WTC11 (cell line): ENCODE measurements at regions of chr1 and their contacts with region 1.

Region 1: GRCh38 chr1:47437447-47438164 is at the start of gene FOXD2:
- DNase-seq: peak; percentile 95
- ATAC-seq: peak; percentile 57
- H3K4me3 Mint-ChIP-seq: peak within 1 kb of the TSS; percentile 74
- H3K27ac Mint-ChIP-seq: no peak within 1 kb of the TSS
- H3K4me1 Mint-ChIP-seq: peaks cover 34% of the 10 kb centered on the region
- H3K27me3 Mint-ChIP-seq: peaks cover 49% of the 10 kb centered on the region
- CTCF ChIP-seq: peak; percentile 99
- total RNA-seq, gene FOXD2: 0.05 to 0.07 TPM (median 0.05 TPM) in 3 replicates

Region 2: DNA sequence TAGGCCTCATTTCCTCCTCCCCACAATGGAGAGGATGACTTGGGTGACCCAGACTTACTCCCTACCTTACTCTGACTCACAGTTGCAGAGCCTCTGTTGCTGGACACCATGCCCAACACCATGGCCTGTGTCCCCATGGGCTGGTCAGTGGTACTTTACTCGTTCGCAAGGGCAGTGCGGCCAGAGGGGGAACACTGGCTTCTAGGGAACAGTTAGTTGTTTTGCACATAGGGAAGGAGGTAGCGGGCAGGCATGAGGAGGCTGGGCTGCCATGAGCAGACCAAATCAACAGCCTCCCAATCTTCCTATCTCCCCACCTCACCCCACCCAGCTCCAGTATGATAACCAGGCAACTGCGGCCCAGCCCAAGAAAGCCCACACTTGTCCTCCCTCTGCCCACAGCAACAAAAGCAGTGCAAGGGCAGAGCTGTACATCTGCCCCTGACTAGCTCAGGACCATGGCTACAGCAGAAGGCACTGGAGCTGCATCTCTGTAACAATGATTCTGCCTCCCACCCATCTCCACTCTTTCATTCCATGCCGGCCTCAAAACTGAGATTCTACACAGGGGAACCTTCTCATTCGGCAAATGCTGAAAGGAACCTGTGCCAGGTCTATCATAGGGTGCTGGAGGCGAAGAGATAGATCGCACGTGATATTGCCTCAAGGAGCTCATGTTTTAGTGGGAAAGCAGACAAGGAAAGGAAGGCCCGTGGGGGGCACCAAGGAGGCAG is 224.2 kb before region 1 on chr1:
- CTCF ChIA-PET with region 1: no interaction called
- POLR2A ChIA-PET with region 1: no interaction called
- DNase-seq: no peak
- ATAC-seq: no peak
- H3K4me3 Mint-ChIP-seq: no peak overlapping the region
- H3K27ac Mint-ChIP-seq: no peak overlapping the region
- H3K4me1 Mint-ChIP-seq: peaks cover 26% of the 10 kb centered on the region
- H3K27me3 Mint-ChIP-seq: peaks cover 49% of the 10 kb centered on the region
- CTCF ChIP-seq: no peak

Region 3: GRCh38 chr1:47388891-47389238 is 48.7 kb before region 1 on chr1:
- CTCF ChIA-PET with region 1: interaction called, 79 read pairs
- POLR2A ChIA-PET with region 1: no interaction called
- DNase-seq: peak; percentile 79
- ATAC-seq: peak; percentile 96
- H3K4me3 Mint-ChIP-seq: no peak overlapping the region
- H3K27ac Mint-ChIP-seq: no peak overlapping the region
- H3K4me1 Mint-ChIP-seq: no peaks in the 10 kb centered on the region
- H3K27me3 Mint-ChIP-seq: peaks cover 25% of the 10 kb centered on the region
- CTCF ChIP-seq: peak; percentile 77

Region 4: GRCh38 chr1:47424336-47424982 is 13.1 kb before region 1 on chr1:
- CTCF ChIA-PET with region 1: interaction called, 109 read pairs
- POLR2A ChIA-PET with region 1: no interaction called
- DNase-seq: peak; percentile 75
- ATAC-seq: peak; percentile 97
- H3K4me3 Mint-ChIP-seq: no peak overlapping the region
- H3K27ac Mint-ChIP-seq: no peak overlapping the region
- H3K4me1 Mint-ChIP-seq: peaks cover 11% of the 10 kb centered on the region
- H3K27me3 Mint-ChIP-seq: peaks cover 93% of the 10 kb centered on the region
- CTCF ChIP-seq: peak; percentile 65

Region 5: GRCh38 chr1:47491341-47491753 is 53.7 kb after region 1 on chr1:
- CTCF ChIA-PET with region 1: interaction called, 15 read pairs
- POLR2A ChIA-PET with region 1: no interaction called
- DNase-seq: no peak
- ATAC-seq: peak; percentile 48; the same call in 1 of the 2 replicates
- H3K4me3 Mint-ChIP-seq: no peak overlapping the region
- H3K27ac Mint-ChIP-seq: no peak overlapping the region
- H3K4me1 Mint-ChIP-seq: peaks cover 9% of the 10 kb centered on the region
- H3K27me3 Mint-ChIP-seq: peaks cover 42% of the 10 kb centered on the region
- CTCF ChIP-seq: no peak

Region 6: DNA sequence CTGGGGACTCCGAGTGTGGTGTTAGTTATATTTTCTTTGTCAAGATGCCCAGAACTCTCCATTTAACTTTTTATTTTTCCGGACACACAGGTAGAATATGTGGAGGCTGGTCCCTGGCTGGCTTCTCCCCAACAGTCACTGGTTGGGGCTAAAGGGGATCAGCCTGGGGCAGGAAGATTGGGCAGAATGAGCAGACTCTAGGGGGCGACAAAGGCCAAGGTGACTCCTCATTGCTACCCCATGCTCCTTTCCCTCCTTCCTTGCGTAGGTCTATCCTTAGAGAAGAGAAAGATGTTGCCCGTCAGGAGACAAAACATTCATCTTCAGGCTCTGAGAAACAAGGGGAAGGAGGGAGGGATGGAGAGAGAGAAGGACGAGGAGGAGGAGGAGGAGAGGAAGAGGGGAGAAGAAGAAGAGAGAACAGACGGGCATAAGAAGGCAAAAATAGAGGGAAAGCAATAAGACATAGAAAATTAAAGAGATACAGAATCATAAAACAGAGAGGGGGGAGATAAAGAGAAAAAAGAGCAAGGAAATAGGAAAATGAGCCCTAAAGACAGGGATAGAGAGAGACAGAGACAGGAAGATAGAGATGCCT is 90.2 kb after region 1 on chr1:
- CTCF ChIA-PET with region 1: interaction called, 52 read pairs
- POLR2A ChIA-PET with region 1: no interaction called
- DNase-seq: peak; percentile 74
- ATAC-seq: peak; percentile 72
- H3K4me3 Mint-ChIP-seq: no peak overlapping the region
- H3K27ac Mint-ChIP-seq: no peak overlapping the region
- H3K4me1 Mint-ChIP-seq: peaks cover 37% of the 10 kb centered on the region
- H3K27me3 Mint-ChIP-seq: peaks cover 36% of the 10 kb centered on the region
- CTCF ChIP-seq: peak; percentile 64

Region 7: DNA sequence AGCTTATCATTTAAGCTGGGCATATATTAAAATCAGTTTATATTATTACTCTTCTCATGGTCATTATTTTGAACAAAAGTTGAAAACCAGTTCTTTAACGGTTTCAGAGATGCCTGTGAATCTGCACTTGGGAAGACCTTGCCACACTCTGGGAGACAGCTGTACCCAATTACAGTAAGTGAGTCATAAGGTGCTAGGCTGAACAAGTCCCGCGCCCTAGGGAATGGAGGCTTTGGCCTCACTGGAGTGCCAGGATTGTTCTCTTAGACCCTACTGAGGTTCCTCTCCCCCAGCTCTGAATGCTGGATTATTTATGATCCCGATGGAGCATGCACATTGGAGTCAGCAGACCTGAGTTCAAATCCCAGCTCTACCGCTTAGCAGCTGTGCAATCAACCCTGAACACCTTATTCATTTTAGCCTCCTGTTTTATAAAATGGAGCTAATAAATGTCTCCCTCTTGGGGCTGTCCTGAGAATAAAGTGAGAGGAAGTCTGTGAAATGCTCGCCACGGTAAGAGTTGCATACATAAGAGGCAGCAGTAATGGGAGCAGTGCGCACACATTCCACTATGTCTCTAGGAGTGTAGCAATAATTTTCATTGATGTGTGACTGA is 266.5 kb after region 1 on chr1:
- CTCF ChIA-PET with region 1: interaction called, 154 read pairs
- POLR2A ChIA-PET with region 1: interaction called, 4 read pairs
- DNase-seq: no peak
- ATAC-seq: no peak
- H3K4me3 Mint-ChIP-seq: no peak overlapping the region
- H3K27ac Mint-ChIP-seq: no peak overlapping the region
- H3K4me1 Mint-ChIP-seq: peaks cover 4% of the 10 kb centered on the region
- H3K27me3 Mint-ChIP-seq: peaks cover 48% of the 10 kb centered on the region
- CTCF ChIP-seq: no peak

Region 8: GRCh38 chr1:47755101-47755990 is 317.7 kb after region 1 on chr1:
- CTCF ChIA-PET with region 1: interaction called, 10 read pairs
- POLR2A ChIA-PET with region 1: no interaction called
- DNase-seq: peak; percentile 87
- ATAC-seq: peak; percentile 78
- H3K4me3 Mint-ChIP-seq: no peak overlapping the region
- H3K27ac Mint-ChIP-seq: no peak overlapping the region
- H3K4me1 Mint-ChIP-seq: peaks cover 14% of the 10 kb centered on the region
- H3K27me3 Mint-ChIP-seq: peaks cover 33% of the 10 kb centered on the region
- CTCF ChIP-seq: peak; percentile 78